ENCODE measurements at regions of chr6 and their contacts with region 1.

Region 1: DNA sequence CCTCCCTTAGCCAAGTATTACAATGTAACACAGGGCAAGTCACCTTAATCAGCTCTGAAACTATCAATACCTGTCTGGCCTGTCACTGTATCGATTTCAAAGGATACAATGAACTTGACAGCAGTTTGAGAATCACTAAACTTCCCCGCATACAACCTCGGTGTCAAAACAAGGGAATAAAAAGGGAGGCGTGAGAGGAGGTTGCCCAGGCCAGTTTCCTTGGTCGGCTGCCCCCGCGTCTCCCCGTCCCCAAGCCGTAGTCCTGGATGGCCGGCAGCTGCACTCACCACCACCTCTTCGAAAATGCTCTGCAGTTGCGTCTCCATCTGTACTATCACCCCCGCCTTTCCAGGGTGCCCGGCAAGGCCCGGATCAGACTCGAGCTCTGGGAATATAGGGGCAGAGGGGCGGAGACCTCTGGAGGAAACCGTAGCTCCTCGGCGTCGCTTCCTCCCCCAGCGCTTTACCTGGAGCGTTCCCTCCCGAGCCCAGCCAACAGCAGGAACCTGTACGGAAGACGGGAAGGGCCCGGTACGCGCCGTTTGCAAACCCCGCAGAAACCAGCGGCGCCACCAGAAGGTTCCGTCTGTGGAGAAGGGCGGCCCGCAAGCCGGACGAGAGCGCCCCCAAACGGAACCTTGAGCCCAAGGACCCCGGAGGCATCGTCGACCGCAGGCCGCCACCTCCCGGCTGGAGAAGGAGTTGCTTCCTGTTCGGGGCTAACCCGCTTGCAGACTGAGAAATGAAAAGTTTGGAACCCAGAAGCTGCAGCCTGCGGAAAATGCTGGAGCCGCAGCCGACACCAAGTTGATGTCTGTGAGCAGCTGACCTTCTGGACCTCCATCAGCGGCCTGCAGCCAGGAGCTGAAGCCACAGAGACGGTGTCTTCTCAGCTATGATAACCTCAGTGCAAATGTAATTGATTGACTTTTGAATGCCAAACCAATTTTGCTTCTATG is at the start of gene MED23:
- DNase-seq: peak; percentile 92
- H3K4me3 Mint-ChIP-seq: peak within 1 kb of the TSS; percentile 99
- H3K27ac Mint-ChIP-seq: peak within 1 kb of the TSS; percentile 94
- H3K4me1 Mint-ChIP-seq: peaks cover 36% of the 10 kb centered on the region
- H3K27me3 Mint-ChIP-seq: no peaks in the 10 kb centered on the region
- total RNA-seq, gene MED23: 34.0 and 36.3 TPM in 2 replicates

Region 2: DNA sequence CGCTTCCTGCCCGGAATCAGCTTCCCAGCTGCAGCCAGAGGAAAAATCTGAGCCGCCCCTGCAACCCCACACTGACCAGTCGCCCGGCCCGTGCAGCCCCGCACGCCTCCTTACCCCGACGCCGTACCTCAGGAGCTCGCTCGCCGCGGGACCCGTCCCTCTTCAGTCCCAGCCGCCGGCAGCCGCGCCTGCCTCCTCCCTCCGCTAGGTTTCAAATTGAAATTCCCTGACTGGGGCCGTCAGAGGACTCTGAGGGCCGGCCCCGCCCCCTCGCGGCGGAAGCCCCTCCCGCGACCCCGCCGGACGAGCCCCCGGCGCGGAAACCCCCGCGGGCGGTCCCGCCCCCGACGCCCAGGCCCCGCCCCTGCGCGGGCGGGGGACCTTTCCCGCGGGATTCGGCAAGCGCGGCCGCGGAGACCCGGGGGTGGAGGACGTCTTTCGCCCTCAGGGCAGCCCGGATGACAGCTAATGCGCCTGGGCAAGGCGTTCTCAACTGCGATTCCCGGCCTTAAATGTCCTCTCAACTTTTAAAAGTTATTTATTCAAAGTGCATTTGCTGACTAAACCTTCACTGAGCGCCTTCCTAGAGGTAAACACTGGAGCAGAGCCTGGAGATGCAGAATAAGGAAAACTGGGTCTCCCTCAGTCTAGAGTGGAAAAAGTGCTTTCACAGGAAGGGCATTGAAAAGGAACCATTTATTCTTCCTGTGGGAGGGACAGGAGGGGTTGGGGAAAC is 564.8 kb before region 1 on chr6 and contains the start of gene EPB41L2:
- intact Hi-C with region 1: loop called (anchors 5 kb)
- DNase-seq: peak; percentile 76
- H3K4me3 Mint-ChIP-seq: peak within 1 kb of the TSS; percentile 81
- H3K27ac Mint-ChIP-seq: peak within 1 kb of the TSS; percentile 14
- H3K4me1 Mint-ChIP-seq: peaks cover 21% of the 10 kb centered on the region
- H3K27me3 Mint-ChIP-seq: peaks cover 15% of the 10 kb centered on the region
- total RNA-seq, gene EPB41L2: 17.7 and 18.7 TPM in 2 replicates

Region 3: GRCh38 chr6:131135244-131136020 is 492.6 kb before region 1 on chr6 and contains the start of gene AKAP7:
- intact Hi-C with region 1: loop called (anchors 2 kb)
- DNase-seq: peak; percentile 39
- H3K4me3 Mint-ChIP-seq: peak within 1 kb of the TSS; percentile 90
- H3K27ac Mint-ChIP-seq: peak within 1 kb of the TSS; percentile 93
- H3K4me1 Mint-ChIP-seq: peaks cover 18% of the 10 kb centered on the region
- H3K27me3 Mint-ChIP-seq: peaks cover 14% of the 10 kb centered on the region
- total RNA-seq, gene AKAP7: 3.4 and 3.8 TPM in 2 replicates

Region 4: DNA sequence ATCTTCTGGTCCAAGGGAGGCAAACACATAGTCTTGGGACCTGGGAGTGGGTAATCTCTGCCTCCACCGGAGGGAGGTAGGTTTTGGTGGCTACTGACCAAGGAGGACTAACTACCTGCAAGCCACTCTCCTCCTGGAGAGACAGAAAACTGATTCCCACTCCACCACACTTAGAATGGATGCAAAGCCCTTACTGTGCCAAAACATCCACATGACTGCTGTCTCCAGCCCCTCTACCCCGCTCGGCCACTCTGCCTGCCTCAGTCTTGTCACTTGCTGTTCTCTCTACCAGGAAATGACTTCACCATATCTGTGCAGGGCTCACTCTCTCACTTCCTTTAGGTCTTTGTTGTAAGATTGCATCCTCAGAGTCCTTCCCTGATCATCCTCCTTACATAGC is 184.5 kb before region 1 on chr6:
- intact Hi-C with region 1: loop called (anchors 5 kb)
- DNase-seq: peak; percentile 24
- H3K4me3 Mint-ChIP-seq: peak overlapping the region; percentile 91
- H3K27ac Mint-ChIP-seq: peak overlapping the region; percentile 95
- H3K4me1 Mint-ChIP-seq: peaks cover 60% of the 10 kb centered on the region
- H3K27me3 Mint-ChIP-seq: no peaks in the 10 kb centered on the region

Region 5: GRCh38 chr6:131683479-131683878 is 55.5 kb after region 1 on chr6:
- intact Hi-C with region 1: loop called (anchors 1 kb)
- DNase-seq: no peak
- H3K4me3 Mint-ChIP-seq: no peak overlapping the region
- H3K27ac Mint-ChIP-seq: no peak overlapping the region
- H3K4me1 Mint-ChIP-seq: peaks cover 24% of the 10 kb centered on the region
- H3K27me3 Mint-ChIP-seq: peaks cover 4% of the 10 kb centered on the region